ENCODE measurements at regions of chr4 and their contacts with region 1.

Region 1: DNA sequence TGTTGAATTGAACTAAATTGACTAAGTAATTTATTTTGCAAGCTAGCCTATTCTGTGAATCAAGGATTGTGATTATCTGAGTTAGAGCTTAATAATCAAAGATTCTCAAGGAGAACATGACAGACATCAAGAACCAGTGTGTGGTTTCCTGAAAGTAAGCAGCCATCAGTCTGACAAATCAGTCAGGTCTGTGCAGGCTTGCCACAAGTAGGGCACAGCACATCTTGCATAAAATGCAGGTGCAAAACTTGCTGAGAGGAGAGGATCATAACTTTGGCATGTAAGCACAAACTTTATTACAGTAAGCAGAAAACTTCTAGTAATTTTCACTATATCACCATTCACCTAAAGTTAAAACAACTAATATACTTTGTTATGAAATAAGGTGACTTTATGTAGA is 22.5 kb downstream of the FAM241A start:
- DNase-seq: no peak
- ATAC-seq: no peak
- H3K4me3 Mint-ChIP-seq: no peak overlapping the region
- H3K27ac Mint-ChIP-seq: no peak overlapping the region
- H3K4me1 Mint-ChIP-seq: peaks cover 2% of the 10 kb centered on the region
- H3K27me3 Mint-ChIP-seq: no peaks in the 10 kb centered on the region
- CTCF ChIP-seq: no peak

Region 2: DNA sequence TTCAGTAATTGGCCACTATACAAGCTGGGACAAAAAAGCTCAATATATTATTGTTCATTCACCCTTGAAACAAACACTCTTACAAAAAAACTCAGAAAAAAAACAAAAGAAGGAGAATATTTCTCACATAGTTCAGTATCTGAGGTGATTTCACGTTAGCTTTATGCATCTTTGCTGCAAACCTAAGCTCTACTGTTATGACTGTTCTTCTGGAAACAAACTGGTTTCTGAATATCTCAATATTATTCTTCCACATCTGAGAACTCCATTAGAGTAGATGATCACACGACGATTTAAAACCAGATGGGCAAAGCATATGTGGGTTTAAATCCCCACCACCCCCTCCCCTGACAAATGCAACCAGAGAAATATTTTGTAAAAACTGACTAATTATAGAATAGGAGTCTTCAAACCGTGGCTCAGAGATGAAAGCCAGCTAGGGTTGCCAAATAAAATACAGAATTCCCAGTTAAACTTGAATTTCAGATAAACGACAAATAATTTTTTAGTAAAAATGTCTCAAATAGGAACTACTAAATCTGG is 204.6 kb before region 1 on chr4:
- CTCF ChIA-PET with region 1: no interaction called
- POLR2A ChIA-PET with region 1: no interaction called
- intact Hi-C with region 1: no loop called
- DNase-seq: no peak
- ATAC-seq: no peak
- H3K4me3 Mint-ChIP-seq: no peak overlapping the region
- H3K27ac Mint-ChIP-seq: no peak overlapping the region
- H3K4me1 Mint-ChIP-seq: peaks cover 9% of the 10 kb centered on the region
- H3K27me3 Mint-ChIP-seq: no peaks in the 10 kb centered on the region
- CTCF ChIP-seq: no peak

Region 3: GRCh38 chr4:112153211-112153791 is 14.5 kb before region 1 on chr4:
- CTCF ChIA-PET with region 1: no interaction called
- POLR2A ChIA-PET with region 1: no interaction called
- intact Hi-C with region 1: loop called (anchors 2 kb)
- DNase-seq: no peak
- ATAC-seq: no peak
- H3K4me3 Mint-ChIP-seq: no peak overlapping the region
- H3K27ac Mint-ChIP-seq: no peak overlapping the region
- H3K4me1 Mint-ChIP-seq: peaks cover 6% of the 10 kb centered on the region
- H3K27me3 Mint-ChIP-seq: no peaks in the 10 kb centered on the region
- CTCF ChIP-seq: no peak

Measured in activated B cell treated with CpG ODN at 0.5 μM for 24 hours (primary cell).